Ascending aorta (tissue), 2 donors: ENCODE measurements at regions of chr4 and their contacts with region 1.

Region 1: DNA sequence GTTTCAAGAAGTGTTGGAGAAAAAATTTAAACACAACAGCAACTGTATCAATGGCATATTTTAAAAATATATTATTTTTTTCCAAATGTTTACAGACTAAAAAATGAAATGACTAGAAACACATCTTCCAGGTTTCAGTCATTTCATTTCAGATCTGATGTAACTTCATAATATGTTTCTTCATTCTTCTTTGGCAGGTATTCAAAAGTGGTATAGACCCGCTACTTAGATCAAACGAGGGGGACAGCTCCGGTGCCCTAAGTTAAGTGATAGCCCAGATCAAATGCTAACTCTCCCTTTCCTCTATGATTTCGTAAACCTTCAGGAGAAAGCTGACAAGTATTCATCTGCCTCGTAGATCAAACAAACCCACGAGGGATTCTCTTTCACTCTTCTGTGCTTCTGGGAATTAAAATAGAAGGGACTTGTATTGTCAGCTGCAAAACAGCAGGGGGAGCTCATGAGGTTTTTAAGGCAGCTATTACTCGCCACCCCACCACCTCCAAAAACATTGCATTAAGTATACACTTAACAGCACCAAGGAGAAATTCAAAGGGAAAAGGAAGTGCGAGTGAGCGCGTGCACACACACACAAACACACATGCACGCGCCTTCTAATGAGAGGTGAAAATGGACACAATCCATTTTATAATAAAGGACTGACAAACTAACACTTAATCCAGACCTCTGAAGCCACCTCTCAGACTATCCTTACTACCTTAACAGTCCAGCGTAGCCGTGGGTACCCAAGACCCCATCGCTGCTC is 21.4 kb downstream of the HELT start:
- DNase-seq: peak in 1 of 2 donors; percentile 73
- H3K4me3 ChIP-seq: peak overlapping the region; percentile 27 to 37
- H3K27ac ChIP-seq: no peak overlapping the region
- H3K4me1 ChIP-seq: peaks cover 0 to 3% of the 10 kb centered on the region in 2 donors
- H3K27me3 ChIP-seq: no peaks in the 10 kb centered on the region
- CTCF ChIP-seq: peak; percentile 72 to 85 (median 74)

Region 2: DNA sequence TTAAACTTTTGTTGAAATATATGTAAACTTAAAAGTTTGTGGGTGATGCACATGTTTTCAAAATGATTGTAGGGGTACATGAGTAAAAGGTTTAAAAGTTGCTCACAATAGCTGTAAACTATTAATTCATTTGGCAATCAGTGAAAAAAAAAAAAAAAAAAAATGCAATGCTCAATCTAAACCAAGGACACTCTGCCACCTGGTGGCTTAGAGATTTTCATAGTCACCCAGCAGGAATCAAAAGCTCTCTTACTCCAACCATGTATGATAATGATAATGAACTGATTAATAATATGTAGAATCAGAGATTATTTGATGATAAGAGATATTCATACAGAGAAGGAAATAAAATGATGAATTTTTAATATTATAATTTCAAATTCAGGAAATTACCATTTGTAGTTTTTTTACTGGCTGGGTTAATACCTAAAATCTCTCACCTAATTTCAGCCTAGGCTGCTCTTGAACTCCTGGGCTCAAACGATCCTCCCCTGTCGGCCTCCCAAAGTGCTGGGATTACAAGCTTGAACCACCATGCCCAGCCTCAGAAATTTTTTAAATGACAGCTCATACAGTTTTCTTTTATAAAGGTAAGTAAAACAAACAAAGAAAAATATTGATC is 56.5 kb after region 1 on chr4:
- intact Hi-C with region 1: loop called (anchors 2 kb)
- DNase-seq: no peak
- H3K4me3 ChIP-seq: no peak overlapping the region
- H3K27ac ChIP-seq: no peak overlapping the region
- H3K4me1 ChIP-seq: no peaks in the 10 kb centered on the region
- H3K27me3 ChIP-seq: no peaks in the 10 kb centered on the region
- CTCF ChIP-seq: peak; percentile 43 to 63 (median 45)

Region 3: GRCh38 chr4:185134307-185134869 is 94.7 kb after region 1 on chr4:
- intact Hi-C with region 1: loop called (anchors 1 kb)
- DNase-seq: no peak
- H3K4me3 ChIP-seq: no peak overlapping the region
- H3K27ac ChIP-seq: no peak overlapping the region
- H3K4me1 ChIP-seq: no peaks in the 10 kb centered on the region
- H3K27me3 ChIP-seq: no peaks in the 10 kb centered on the region
- CTCF ChIP-seq: peak; percentile 56 to 74 (median 74)

Region 4: DNA sequence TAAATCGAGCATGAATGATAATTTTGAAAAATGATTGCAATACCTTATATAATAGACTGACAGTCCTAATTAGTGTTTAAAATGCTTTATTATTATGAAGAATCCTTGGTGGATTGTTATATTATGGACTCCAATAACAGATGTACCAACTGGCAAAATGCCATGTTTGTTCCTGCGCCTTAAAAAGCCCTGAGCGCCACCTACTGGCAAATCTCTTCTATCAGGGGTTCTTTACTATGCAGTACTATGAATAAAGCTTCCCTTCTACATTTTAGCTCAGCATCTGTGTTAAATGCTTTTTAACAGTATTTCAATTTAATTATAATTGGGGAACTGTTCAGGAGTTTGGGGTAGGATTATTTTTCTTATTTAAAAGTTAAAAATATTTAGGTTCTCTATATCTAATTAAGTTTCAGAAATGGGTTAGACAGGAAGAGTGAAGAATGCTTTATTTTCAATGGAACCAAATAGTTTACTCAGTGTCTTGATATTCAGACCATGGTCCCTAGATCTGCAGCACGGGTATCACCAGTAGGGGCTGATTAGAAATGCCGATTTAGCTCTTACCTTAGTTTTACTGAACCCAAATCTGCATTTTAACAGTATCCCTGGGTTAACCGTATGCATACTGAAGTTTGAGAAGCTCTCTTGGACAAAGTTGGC is 144.1 kb after region 1 on chr4:
- intact Hi-C with region 1: loop called (anchors 1 kb)
- DNase-seq: peak in 1 of 2 donors; percentile 93
- H3K4me3 ChIP-seq: no peak overlapping the region
- H3K27ac ChIP-seq: peak overlapping the region in 1 of 2 donors; percentile 28
- H3K4me1 ChIP-seq: peaks cover 0 to 29% of the 10 kb centered on the region in 2 donors
- H3K27me3 ChIP-seq: no peaks in the 10 kb centered on the region
- CTCF ChIP-seq: peak; percentile 57 to 77 (median 76)